ENCODE measurements at regions of chr21 and their contacts with region 1.

Region 1: GRCh38 chr21:41283211-41283818 is 33.3 kb upstream of the FAM3B start:
- DNase-seq: peak; percentile 41 to 79 (median 56)
- H3K4me3 ChIP-seq: no peak overlapping the region
- H3K27ac ChIP-seq: no peak overlapping the region
- H3K4me1 ChIP-seq: no peaks in the 10 kb centered on the region
- H3K27me3 ChIP-seq: peaks cover 6% of the 10 kb centered on the region
- CTCF ChIP-seq: peak; percentile 38 to 86 (median 78)
- POLR2A ChIP-seq: no peak

Region 2: GRCh38 chr21:41460578-41461527 is 177.5 kb after region 1 on chr21:
- intact Hi-C with region 1: loop called (anchors 2 to 5 kb)
- DNase-seq: peak; percentile 65 to 86 (median 80)
- H3K4me3 ChIP-seq: no peak overlapping the region
- H3K27ac ChIP-seq: no peak overlapping the region
- H3K4me1 ChIP-seq: no peaks in the 10 kb centered on the region
- H3K27me3 ChIP-seq: no peaks in the 10 kb centered on the region
- CTCF ChIP-seq: peak; percentile 62 to 83 (median 82)
- POLR2A ChIP-seq: no peak

Region 3: DNA sequence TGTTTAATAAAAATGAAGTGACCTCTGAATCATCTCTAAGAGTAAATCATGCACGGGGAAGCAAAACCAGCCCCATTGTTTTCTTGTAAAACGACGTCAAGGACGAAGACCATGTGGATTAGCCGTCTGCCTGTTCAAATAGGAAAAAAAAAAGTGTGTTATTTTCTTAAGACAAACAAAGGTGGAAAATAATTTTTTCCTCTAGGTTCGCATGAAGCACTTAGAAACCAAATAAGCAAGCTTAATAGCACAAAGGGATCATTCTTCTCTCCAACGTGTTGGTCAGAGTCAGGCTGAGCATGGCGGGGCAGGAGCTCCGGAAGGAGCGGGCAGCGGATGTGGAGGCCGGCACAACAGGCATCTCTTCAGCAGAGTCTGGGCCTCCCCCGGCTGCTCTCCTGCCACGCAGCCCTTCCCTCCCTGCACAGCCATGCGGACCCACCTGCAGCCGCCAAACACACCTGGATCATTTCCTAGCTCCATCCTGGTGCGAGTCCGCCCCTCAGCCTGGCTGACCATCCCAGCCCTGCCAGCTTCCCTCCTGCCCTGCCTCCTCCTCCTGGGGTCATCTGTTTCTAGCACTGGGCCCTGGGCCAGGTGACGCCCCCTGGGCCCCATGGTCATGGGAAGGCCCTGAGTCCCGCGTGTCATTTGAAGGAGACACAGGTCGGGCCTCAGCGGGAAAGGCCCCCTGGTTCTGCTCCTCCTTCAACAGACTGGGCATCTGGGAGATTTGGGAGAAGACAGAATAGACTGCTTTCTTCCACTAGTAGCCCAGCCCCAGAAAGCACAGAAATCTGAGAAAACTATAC is 182.9 kb after region 1 on chr21:
- intact Hi-C with region 1: loop called (anchors 2 to 5 kb)
- DNase-seq: peak in 1 of 7 donors; percentile 43
- H3K4me3 ChIP-seq: no peak overlapping the region
- H3K27ac ChIP-seq: no peak overlapping the region
- H3K4me1 ChIP-seq: no peaks in the 10 kb centered on the region
- H3K27me3 ChIP-seq: no peaks in the 10 kb centered on the region
- CTCF ChIP-seq: no peak
- POLR2A ChIP-seq: no peak

Measured in adrenal gland (tissue), 19 donors.